HepG2 (cell line): ENCODE measurements at regions of chr1 and their contacts with region 1.

Region 1: GRCh38 chr1:214050513-214051401 is 63.0 kb downstream of the PROX1 start:
- DNase-seq: peak; percentile 99
- ATAC-seq: peak; percentile 91
- H3K4me3 ChIP-seq: peak overlapping the region in 2 of 3 experiments; percentile 4 to 32; a peak in 3 of 6 replicates
- H3K27ac ChIP-seq: peak overlapping the region; percentile 91
- H3K4me1 ChIP-seq: peaks cover 73% of the 10 kb centered on the region
- H3K27me3 ChIP-seq: no peaks in the 10 kb centered on the region
- CTCF ChIP-seq: no peak
- EP300 ChIP-seq: peak; percentile 66 to 96
- POLR2A ChIP-seq: peak in 1 of 2 experiments; percentile 44; a peak in 2 of 4 replicates
- RAD21 ChIP-seq: no peak; the same call in none of the 2 replicates

Region 2: DNA sequence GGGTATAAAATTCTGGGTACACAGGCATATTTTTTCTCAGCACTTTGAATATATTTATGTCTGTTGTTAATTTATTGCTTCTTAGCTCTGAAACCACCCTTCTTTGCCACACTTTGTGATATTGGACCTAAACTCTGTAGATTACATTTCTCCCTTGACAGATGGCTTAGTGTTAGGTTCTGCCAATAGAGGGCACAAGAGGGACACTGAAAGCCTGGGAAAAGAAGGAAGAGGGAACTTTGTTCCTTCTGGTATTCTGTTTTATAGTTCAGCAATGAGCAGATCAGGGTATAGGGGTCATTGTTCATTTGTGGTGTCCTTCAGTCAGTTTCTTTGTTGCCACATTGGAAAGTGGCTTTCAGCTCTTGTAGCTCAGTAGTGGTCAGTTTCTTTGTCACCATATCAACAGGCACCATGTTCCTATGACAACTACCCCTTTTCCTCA is 486.5 kb before region 1 on chr1:
- CTCF ChIA-PET with region 1: no interaction called
- POLR2A ChIA-PET with region 1: interaction called, 11 read pairs
- in situ Hi-C with region 1: no loop called
- intact Hi-C with region 1: no loop called
- DNase-seq: peak; percentile 79
- ATAC-seq: peak; percentile 71
- H3K4me3 ChIP-seq: no peak overlapping the region
- H3K27ac ChIP-seq: peak overlapping the region; percentile 38
- H3K4me1 ChIP-seq: peaks cover 30% of the 10 kb centered on the region
- H3K27me3 ChIP-seq: no peaks in the 10 kb centered on the region
- CTCF ChIP-seq: peak; percentile 62
- EP300 ChIP-seq: peak in 1 of 2 experiments; percentile 31; a peak in 1 of 4 replicates
- POLR2A ChIP-seq: no peak
- RAD21 ChIP-seq: peak; percentile 77

Region 3: GRCh38 chr1:214029796-214030195 is 21.0 kb before region 1 on chr1:
- CTCF ChIA-PET with region 1: no interaction called
- POLR2A ChIA-PET with region 1: interaction called, 150 read pairs
- in situ Hi-C with region 1: no loop called
- intact Hi-C with region 1: loop called (anchors 2 kb)
- DNase-seq: no peak
- ATAC-seq: no peak
- H3K4me3 ChIP-seq: no peak overlapping the region
- H3K27ac ChIP-seq: peak overlapping the region; percentile 85
- H3K4me1 ChIP-seq: peaks cover 81% of the 10 kb centered on the region
- H3K27me3 ChIP-seq: no peaks in the 10 kb centered on the region
- CTCF ChIP-seq: no peak
- EP300 ChIP-seq: no peak
- POLR2A ChIP-seq: no peak
- RAD21 ChIP-seq: no peak

Region 4: GRCh38 chr1:214067397-214067796 is 16.6 kb after region 1 on chr1:
- CTCF ChIA-PET with region 1: no interaction called
- POLR2A ChIA-PET with region 1: interaction called, 10 read pairs
- in situ Hi-C with region 1: no loop called
- intact Hi-C with region 1: no loop called
- DNase-seq: no peak
- ATAC-seq: no peak
- H3K4me3 ChIP-seq: no peak overlapping the region
- H3K27ac ChIP-seq: no peak overlapping the region
- H3K4me1 ChIP-seq: peaks cover 38% of the 10 kb centered on the region
- H3K27me3 ChIP-seq: no peaks in the 10 kb centered on the region
- CTCF ChIP-seq: no peak
- EP300 ChIP-seq: no peak
- POLR2A ChIP-seq: no peak
- RAD21 ChIP-seq: no peak

Region 5: DNA sequence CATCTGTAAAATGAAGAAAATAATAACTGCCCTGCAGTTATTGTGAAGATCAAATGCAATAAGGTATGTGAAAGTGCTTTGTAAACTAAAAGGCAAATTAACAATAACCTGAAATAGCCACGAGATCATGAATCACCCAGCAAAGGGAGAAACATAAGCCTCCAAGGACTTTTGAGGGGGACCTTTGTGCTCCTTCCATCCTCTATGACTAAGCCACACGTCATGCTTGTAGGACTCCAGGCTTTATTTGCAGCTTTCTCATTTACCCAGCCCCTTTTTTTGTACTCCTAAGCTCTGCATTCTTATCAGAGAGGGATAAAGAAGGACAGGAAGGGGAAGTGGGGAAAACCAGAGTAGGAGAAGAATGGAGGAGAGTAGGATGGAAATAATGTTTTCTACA is 52.1 kb after region 1 on chr1:
- CTCF ChIA-PET with region 1: no interaction called
- POLR2A ChIA-PET with region 1: interaction called, 35 read pairs
- in situ Hi-C with region 1: no loop called
- intact Hi-C with region 1: loop called (anchors 5 kb)
- DNase-seq: peak; percentile 81
- ATAC-seq: peak; percentile 35; the same call in 2 of the 3 replicates
- H3K4me3 ChIP-seq: no peak overlapping the region
- H3K27ac ChIP-seq: no peak overlapping the region
- H3K4me1 ChIP-seq: peaks cover 39% of the 10 kb centered on the region
- H3K27me3 ChIP-seq: no peaks in the 10 kb centered on the region
- CTCF ChIP-seq: no peak
- EP300 ChIP-seq: peak in 1 of 2 experiments; percentile 52; a peak in 2 of 4 replicates
- POLR2A ChIP-seq: no peak
- RAD21 ChIP-seq: no peak

Region 6: DNA sequence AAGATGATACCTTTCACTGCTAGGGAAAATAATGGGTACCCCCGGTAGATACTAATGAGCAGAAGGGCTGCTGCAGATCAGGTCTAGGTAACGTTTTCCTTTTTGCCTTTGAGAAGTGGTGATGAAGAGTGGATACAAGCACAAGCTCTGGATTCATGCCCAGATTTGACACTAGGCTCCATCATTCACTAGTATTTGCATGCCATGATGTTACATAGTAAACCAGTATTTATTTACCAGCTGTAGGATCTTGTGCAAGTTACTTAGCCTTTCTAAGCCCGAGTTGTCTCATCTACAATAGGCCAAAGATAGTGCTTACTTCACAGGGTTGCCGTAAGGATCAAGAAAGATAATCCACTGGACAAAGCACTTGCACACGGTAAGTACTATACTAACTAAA is 486.5 kb after region 1 on chr1:
- CTCF ChIA-PET with region 1: no interaction called
- POLR2A ChIA-PET with region 1: no interaction called
- in situ Hi-C with region 1: no loop called
- intact Hi-C with region 1: no loop called
- DNase-seq: no peak
- ATAC-seq: no peak
- H3K4me3 ChIP-seq: no peak overlapping the region
- H3K27ac ChIP-seq: no peak overlapping the region
- H3K4me1 ChIP-seq: no peaks in the 10 kb centered on the region
- H3K27me3 ChIP-seq: no peaks in the 10 kb centered on the region
- CTCF ChIP-seq: no peak
- EP300 ChIP-seq: no peak
- POLR2A ChIP-seq: no peak
- RAD21 ChIP-seq: no peak